ENCODE measurements at regions of chr3 and their contacts with region 1.

Region 1: DNA sequence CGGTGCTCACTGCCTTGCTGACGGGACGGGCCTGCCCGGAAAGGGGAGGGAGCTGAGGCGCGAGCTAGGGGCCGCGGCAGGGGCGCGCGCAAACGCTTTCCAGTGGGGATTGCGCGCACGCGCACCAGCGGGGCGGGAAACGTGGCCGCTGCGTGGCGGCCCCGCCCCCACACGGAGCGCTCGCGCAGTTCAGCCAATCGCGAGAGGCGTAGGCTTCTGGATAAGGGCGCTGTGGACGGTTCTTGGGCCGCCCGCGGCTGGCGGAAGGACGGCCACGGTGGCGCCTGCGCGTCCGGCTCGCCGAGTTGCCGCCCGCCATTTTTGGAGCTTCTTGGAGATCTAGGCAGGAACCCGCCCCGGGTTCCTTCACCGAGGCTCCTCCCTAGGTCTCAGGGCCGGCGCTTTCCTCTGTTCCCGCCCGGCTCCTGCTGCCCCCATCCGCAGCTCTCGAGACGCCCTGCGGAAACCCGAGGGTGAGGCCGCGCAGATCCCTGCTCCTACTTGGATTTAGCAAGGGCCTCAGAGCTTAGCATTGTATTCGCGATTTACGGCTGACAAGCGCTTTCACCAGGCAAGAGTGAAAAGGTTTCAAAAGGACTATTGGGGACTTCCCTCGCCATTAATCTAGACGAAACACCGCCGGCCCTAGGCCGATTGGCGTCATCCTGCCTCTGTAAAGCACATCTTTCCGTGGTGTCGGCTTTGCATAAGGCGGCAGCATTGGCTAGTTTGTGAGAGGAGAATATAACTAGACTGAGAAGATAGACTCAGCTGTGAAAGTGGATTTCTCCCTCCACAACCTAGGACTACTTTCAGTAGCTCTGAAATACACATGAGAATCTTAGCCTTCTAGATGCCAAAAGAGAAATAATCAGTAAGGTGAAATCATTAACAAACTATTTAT is 496 bp upstream of the STAG1 start:
- DNase-seq: peak; percentile 100
- H3K4me3 Mint-ChIP-seq: peak overlapping the region; percentile 81
- H3K27ac Mint-ChIP-seq: peak overlapping the region; percentile 95
- H3K4me1 Mint-ChIP-seq: peaks cover 34% of the 10 kb centered on the region
- H3K27me3 Mint-ChIP-seq: no peaks in the 10 kb centered on the region

Region 2: GRCh38 chr3:136075218-136075808 is 677.4 kb before region 1 on chr3:
- intact Hi-C with region 1: loop called (anchors 1 kb)
- DNase-seq: peak; percentile 92
- H3K4me3 Mint-ChIP-seq: no peak overlapping the region
- H3K27ac Mint-ChIP-seq: no peak overlapping the region
- H3K4me1 Mint-ChIP-seq: peaks cover 2% of the 10 kb centered on the region
- H3K27me3 Mint-ChIP-seq: peaks cover 10% of the 10 kb centered on the region

Region 3: DNA sequence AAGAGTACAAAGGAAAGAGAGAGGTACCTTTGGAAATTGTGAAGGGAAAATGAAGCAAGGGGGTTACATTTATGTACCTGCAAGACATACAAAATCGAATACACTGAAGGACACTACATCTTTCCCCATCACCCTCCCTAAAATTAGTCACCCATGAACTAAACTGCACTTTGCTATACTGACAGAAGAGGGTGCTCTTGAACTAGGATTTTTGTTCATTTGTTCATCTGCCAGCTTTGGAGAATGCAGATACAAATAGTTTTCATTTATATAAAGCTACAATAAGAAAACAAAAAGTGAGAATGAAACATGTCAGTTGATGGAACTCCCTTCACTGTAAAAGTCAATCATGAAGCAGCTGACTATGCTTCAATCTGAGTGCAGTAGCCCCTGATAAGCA is 446.8 kb before region 1 on chr3:
- intact Hi-C with region 1: loop called (anchors 1 kb)
- DNase-seq: peak; percentile 59
- H3K4me3 Mint-ChIP-seq: no peak overlapping the region
- H3K27ac Mint-ChIP-seq: no peak overlapping the region
- H3K4me1 Mint-ChIP-seq: peaks cover 2% of the 10 kb centered on the region
- H3K27me3 Mint-ChIP-seq: no peaks in the 10 kb centered on the region

Region 4: DNA sequence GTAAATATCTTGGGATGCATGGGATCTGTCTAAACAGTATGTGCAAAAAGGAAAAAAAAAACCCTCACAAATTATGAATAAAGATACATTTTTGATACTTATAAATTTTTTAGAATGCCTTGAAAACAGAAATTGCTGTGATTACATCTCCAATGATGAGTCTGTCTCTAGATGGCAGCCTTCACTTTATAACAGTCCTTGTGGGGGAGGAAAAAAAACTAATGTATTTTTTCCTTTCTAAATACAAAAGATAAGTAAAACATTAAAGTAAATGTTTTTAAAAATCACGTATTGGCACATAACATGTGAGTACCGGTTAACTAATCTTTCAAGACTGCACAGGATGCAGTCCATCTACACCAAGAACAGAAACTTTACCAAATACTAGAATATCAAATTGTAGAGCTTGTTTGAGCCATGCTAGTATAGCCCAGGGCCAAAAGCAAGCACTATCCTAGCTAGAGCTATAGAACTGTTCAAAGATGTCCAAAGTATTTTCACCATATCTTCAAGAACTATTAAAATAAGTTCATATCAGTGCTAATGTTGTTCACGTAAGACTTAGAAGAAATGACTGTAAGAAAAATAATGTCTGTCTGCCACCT is 206.9 kb before region 1 on chr3:
- intact Hi-C with region 1: loop called (anchors 5 kb)
- DNase-seq: no peak
- H3K4me3 Mint-ChIP-seq: no peak overlapping the region
- H3K27ac Mint-ChIP-seq: no peak overlapping the region
- H3K4me1 Mint-ChIP-seq: peaks cover 2% of the 10 kb centered on the region
- H3K27me3 Mint-ChIP-seq: no peaks in the 10 kb centered on the region

Region 5: GRCh38 chr3:136818769-136819391 is 66.2 kb after region 1 on chr3 and contains the start of gene SLC35G2:
- intact Hi-C with region 1: loop called (anchors 1 kb)
- DNase-seq: peak; percentile 79
- H3K4me3 Mint-ChIP-seq: peak within 1 kb of the TSS; percentile 87
- H3K27ac Mint-ChIP-seq: peak within 1 kb of the TSS; percentile 81
- H3K4me1 Mint-ChIP-seq: peaks cover 21% of the 10 kb centered on the region
- H3K27me3 Mint-ChIP-seq: peaks cover 38% of the 10 kb centered on the region
- total RNA-seq, gene SLC35G2: 3.4 and 3.8 TPM in 2 replicates

Region 6: DNA sequence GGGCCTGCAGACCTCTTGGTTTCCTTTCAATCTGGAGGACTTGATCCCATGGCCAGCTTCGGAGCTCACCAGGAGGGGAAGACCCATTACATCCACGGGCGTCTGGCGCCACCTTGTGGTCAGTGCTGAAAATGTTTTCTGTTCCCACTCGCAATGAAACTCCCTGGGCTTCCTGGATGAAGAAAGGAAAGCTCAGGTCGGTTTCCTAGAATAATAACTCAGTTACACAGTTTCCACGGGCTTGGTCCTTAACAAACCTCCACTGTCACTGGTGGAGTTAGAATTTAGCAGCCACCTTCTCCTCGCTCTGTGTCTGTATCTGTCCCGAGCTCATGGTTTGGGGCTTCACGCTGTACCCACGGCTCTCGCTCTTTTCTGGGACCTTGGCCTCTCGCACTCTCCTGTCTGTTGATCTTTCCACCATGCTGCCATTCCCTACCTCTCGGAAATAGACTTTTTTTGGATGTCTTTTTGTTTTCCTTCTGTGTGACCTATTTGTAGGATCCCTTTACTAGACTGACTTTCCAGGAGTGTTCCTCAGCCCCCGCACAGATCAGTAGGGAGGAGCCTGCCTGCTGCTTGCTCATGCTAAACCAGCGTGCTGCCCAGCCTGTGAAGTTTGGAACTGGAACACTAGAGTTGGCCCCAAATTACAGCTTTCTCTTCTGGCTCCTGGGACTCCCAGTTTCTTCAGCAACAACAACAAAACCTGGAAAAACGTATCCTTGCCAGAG is 261.4 kb after region 1 on chr3:
- intact Hi-C with region 1: loop called (anchors 1 kb)
- DNase-seq: peak; percentile 95
- H3K4me3 Mint-ChIP-seq: peak overlapping the region; percentile 77
- H3K27ac Mint-ChIP-seq: no peak overlapping the region
- H3K4me1 Mint-ChIP-seq: peaks cover 10% of the 10 kb centered on the region
- H3K27me3 Mint-ChIP-seq: peaks cover 3% of the 10 kb centered on the region